Endothelial cell of umbilical vein (primary cell): ENCODE measurements at regions of chr10 and their contacts with region 1.

Region 1: GRCh38 chr10:61063034-61063433 is 119.0 kb upstream of the RHOBTB1 start:
- DNase-seq: peak; percentile 16
- H3K4me3 ChIP-seq: no peak overlapping the region
- H3K27ac ChIP-seq: no peak overlapping the region
- H3K4me1 ChIP-seq: peaks cover 13% of the 10 kb centered on the region
- H3K27me3 ChIP-seq: no peaks in the 10 kb centered on the region
- CTCF ChIP-seq: no peak
- POLR2A ChIP-seq: no peak

Region 2: DNA sequence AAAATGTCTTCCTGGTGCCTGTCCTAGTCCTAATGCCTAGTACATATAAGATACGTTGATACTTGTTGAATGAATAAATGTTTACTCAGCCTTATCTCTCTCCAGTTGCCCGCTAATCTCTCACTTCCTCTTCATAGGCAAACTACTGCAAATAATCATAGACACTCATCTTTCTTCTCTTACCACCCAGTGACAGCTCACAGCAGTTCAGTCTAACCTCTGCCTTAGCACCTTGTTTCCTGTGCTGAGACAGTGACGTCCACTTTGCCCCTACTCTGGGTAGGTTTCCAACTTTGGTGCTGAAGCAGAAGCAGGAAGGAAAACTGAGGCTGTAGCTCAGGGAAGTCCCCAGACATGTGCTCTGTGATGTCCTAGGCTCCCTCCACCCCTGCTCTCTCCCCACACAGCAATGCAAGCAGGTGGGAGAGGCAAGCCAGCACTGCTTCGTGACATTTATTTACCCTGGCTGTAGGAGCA is 73.6 kb before region 1 on chr10:
- CTCF ChIA-PET with region 1: no interaction called
- POLR2A ChIA-PET with region 1: no interaction called
- dilution Hi-C with region 1: no loop called
- intact Hi-C with region 1: loop called (anchors 5 kb)
- DNase-seq: no peak
- H3K4me3 ChIP-seq: no peak overlapping the region
- H3K27ac ChIP-seq: no peak overlapping the region
- H3K4me1 ChIP-seq: peaks cover 18% of the 10 kb centered on the region
- H3K27me3 ChIP-seq: no peaks in the 10 kb centered on the region
- CTCF ChIP-seq: no peak
- POLR2A ChIP-seq: no peak